Activated CD4-positive, alpha-beta T cell treated with anti-CD3 and anti-CD28 coated beads for 36 hours (primary cell): ENCODE measurements at regions of chr2 and their contacts with region 1.

Region 1: DNA sequence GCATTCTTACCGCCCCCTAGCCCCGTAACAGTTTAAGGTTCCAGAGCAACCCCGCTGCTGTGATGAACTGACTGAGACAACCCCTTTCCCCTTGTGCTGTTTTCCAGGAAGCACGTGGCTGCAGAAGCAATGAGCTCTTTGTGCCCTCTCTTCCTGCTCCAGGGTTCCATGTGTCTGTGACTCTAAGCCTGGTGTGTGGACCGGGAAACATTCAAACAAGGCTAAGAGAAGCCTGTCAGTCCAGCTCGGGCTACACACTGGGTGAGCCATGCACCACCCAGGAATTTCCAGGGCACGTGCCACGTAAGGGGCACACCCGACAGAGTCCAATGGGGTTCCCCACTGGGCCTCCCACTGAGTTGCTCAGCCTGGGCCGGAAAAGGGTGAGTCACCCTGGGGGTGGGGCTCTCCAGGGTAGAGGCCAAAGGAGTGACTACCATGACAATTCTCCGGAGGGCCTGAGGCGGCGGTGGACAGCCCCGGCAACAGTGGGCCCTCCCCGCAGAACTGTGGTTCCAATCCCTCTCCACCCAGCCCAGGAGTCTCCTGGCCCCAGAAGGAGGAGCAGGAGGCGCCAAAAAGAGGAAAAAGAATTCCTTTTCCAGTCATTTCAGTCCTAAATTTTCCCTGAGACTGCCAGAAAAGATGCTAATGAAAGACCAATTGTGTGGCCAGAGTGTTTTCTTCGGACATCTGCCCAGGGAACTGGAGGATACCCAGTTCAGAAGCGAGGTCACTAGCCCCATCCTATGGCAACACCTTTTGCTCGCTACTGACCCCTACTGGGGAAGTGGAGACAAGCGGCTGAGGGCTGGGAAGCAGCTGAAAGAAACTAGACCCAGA is 157.8 kb upstream of the SLC1A4 start:
- DNase-seq: peak; percentile 92
- ATAC-seq: peak; percentile 96
- H3K4me3 Mint-ChIP-seq: peak overlapping the region; percentile 34
- H3K27ac Mint-ChIP-seq: peak overlapping the region; percentile 86
- H3K4me1 Mint-ChIP-seq: peaks cover 16% of the 10 kb centered on the region
- H3K27me3 Mint-ChIP-seq: no peaks in the 10 kb centered on the region

Region 2: DNA sequence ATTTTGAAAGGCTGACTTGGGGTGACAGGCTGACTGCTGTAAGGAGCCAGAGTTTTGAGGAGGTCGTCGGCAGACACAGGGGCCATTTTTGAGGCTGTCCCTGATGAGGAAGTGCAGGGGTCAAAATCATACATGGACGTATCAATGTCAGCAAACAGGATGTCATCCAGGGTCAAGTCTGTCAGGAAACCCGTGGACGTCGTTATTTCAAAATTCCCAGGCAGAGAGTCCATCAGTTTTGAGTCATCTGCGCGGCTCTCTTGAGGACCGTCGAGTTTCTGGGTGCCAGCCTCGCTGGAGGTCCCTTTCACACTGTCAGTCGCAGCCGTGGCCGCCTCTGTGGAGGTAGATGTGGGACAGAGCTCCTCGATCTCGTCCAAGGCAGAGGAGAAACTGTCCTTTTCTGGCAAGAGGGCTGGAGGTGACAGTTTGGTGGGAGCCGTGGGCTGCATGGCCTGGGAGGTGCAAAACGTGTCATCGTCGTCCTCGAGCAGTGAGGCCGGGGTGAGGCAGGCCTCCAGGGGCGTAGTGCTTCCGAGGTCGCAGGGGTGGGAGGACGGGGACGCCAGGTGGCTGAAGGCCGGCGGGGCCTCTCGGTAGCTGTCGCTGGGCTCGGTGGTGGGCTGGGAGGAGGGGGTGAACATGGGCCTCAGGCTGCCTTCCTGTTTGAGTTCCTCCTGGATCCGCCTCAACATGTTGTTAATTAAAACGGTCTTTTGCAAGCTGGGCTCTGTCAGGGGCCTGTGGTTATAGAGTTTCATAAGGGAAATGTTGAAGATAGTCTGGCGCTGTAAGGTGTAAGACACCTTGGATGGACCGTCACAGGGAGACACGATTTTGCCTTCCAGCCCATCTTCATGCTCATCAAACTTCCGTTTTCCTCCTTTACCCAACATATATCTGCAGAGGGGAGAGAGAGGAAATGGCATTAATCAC is 195.1 kb before region 1 on chr2:
- CTCF ChIA-PET with region 1: interaction called, 10 read pairs
- POLR2A ChIA-PET with region 1: no interaction called
- intact Hi-C with region 1: no loop called
- DNase-seq: peak; percentile 25
- ATAC-seq: peak; percentile 30
- H3K4me3 Mint-ChIP-seq: peak overlapping the region; percentile 46
- H3K27ac Mint-ChIP-seq: peak overlapping the region; percentile 78
- H3K4me1 Mint-ChIP-seq: peaks cover 52% of the 10 kb centered on the region
- H3K27me3 Mint-ChIP-seq: no peaks in the 10 kb centered on the region

Region 3: GRCh38 chr2:64767670-64768468 is 63.5 kb before region 1 on chr2:
- CTCF ChIA-PET with region 1: interaction called, 11 read pairs
- POLR2A ChIA-PET with region 1: no interaction called
- intact Hi-C with region 1: loop called (anchors 1 to 2 kb)
- DNase-seq: peak; percentile 86
- ATAC-seq: peak; percentile 84
- H3K4me3 Mint-ChIP-seq: peak overlapping the region; percentile 71
- H3K27ac Mint-ChIP-seq: peak overlapping the region; percentile 80
- H3K4me1 Mint-ChIP-seq: peaks cover 25% of the 10 kb centered on the region
- H3K27me3 Mint-ChIP-seq: peaks cover 2% of the 10 kb centered on the region

Region 4: GRCh38 chr2:64819774-64820696 is 11.3 kb before region 1 on chr2:
- CTCF ChIA-PET with region 1: interaction called, 17 read pairs
- POLR2A ChIA-PET with region 1: interaction called, 4 read pairs
- intact Hi-C with region 1: no loop called
- DNase-seq: peak; percentile 75
- ATAC-seq: peak; percentile 98
- H3K4me3 Mint-ChIP-seq: peak overlapping the region; percentile 35
- H3K27ac Mint-ChIP-seq: peak overlapping the region; percentile 92
- H3K4me1 Mint-ChIP-seq: peaks cover 23% of the 10 kb centered on the region
- H3K27me3 Mint-ChIP-seq: no peaks in the 10 kb centered on the region